Spleen (tissue), 13 donors: ENCODE measurements at regions of chr9 and their contacts with region 1.

Region 1: DNA sequence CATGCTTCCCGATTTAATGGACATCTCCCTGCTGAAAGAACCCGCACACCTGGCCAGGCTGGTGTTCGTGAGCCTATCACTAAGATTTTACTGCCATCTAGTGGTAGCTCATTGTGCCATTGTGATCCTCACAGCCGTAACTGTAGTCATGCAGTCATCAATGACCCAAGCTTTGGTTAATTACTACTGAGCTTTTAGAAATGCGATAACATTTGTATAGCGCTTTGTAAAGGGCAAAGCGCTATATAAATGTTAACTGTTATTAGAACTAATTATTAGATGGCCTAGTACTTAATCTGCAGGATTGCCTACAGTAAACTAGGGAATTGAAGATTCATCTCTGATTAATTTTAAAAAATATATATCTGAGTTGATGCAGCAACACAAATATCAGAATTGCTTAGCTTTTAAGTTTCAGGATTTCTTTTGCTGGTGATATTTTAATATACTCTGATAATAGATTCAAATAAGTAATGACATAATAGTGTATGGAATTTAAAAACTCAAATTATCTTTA is 90.2 kb downstream of the HACD4 start:
- DNase-seq: no peak
- H3K4me3 ChIP-seq: no peak overlapping the region
- H3K27ac ChIP-seq: no peak overlapping the region
- H3K4me1 ChIP-seq: peaks cover 0 to 6% (median 3%) of the 10 kb centered on the region in 6 donors
- H3K27me3 ChIP-seq: no peaks in the 10 kb centered on the region
- CTCF ChIP-seq: peak; percentile 60 to 88 (median 79)
- POLR2A ChIP-seq: no peak

Region 2: GRCh38 chr9:19925817-19926503 is 1015.3 kb before region 1 on chr9:
- intact Hi-C with region 1: loop called (anchors 5 kb)
- DNase-seq: peak; percentile 85
- H3K4me3 ChIP-seq: peak overlapping the region in 2 of 8 donors; percentile 12 to 56
- H3K27ac ChIP-seq: no peak overlapping the region
- H3K4me1 ChIP-seq: peaks cover 3 to 14% (median 10%) of the 10 kb centered on the region in 6 donors
- H3K27me3 ChIP-seq: peaks cover 0 to 20% (median 0%) of the 10 kb centered on the region in 7 donors
- CTCF ChIP-seq: peak; percentile 86 to 95 (median 93)
- POLR2A ChIP-seq: no peak

Region 3: GRCh38 chr9:20356403-20357035 is 584.7 kb before region 1 on chr9:
- intact Hi-C with region 1: loop called (anchors 5 kb)
- DNase-seq: no peak
- H3K4me3 ChIP-seq: no peak overlapping the region
- H3K27ac ChIP-seq: no peak overlapping the region
- H3K4me1 ChIP-seq: peaks cover 0 to 19% (median 3%) of the 10 kb centered on the region in 6 donors
- H3K27me3 ChIP-seq: no peaks in the 10 kb centered on the region
- CTCF ChIP-seq: peak in 10 of 11 experiments; percentile 19 to 55 (median 49)
- POLR2A ChIP-seq: no peak

Region 4: GRCh38 chr9:20441711-20442423 is 499.4 kb before region 1 on chr9:
- intact Hi-C with region 1: no loop called
- DNase-seq: no peak
- H3K4me3 ChIP-seq: no peak overlapping the region
- H3K27ac ChIP-seq: no peak overlapping the region
- H3K4me1 ChIP-seq: no peaks in the 10 kb centered on the region
- H3K27me3 ChIP-seq: no peaks in the 10 kb centered on the region
- CTCF ChIP-seq: no peak
- POLR2A ChIP-seq: no peak